ENCODE measurements at regions of chr2 and their contacts with region 1.

Region 1: GRCh38 chr2:84925724-84926376 is 20.4 kb downstream of the TMSB10 start:
- DNase-seq: peak; percentile 95 to 98 (median 98)
- H3K4me3 ChIP-seq: peak overlapping the region; percentile 81
- H3K4me3 Mint-ChIP-seq: peak overlapping the region; percentile 91 to 99 (median 96)
- H3K27ac ChIP-seq: no peak overlapping the region
- H3K27ac Mint-ChIP-seq: peak overlapping the region; percentile 90 to 94 (median 91)
- H3K4me1 ChIP-seq: peaks cover 29% of the 10 kb centered on the region
- H3K4me1 Mint-ChIP-seq: peaks cover 28 to 34% (median 33%) of the 10 kb centered on the region in 3 donors
- H3K27me3 ChIP-seq: no peaks in the 10 kb centered on the region
- H3K27me3 Mint-ChIP-seq: peaks cover 0 to 1% of the 10 kb centered on the region in 2 donors

Region 2: DNA sequence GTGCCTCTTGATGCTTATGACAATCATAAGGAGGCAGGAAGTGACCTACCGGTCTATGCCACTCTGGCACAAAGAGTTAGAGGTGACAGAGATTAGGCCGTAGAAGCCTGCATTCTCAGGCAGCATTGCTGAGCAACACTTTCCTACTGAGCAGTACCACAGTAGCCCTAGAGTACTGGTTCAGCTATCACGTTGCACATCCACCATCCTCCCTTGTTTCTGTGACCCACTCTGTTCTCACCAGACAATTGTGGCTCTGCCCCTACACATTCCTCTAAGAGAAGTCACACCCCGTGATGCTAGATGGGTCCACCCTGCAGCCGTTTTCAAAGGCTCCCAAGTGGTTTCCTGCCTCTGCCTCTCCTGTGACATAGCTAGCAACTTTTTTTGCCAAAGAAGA is 444.1 kb before region 1 on chr2:
- CTCF ChIA-PET with region 1: interaction called, 12 read pairs
- POLR2A ChIA-PET with region 1: no interaction called
- DNase-seq: peak in 2 of 5 donors; percentile 9 to 21
- H3K4me3 ChIP-seq: no peak overlapping the region
- H3K4me3 Mint-ChIP-seq: peak overlapping the region in 4 of 7 donors; percentile 6 to 72 (median 24)
- H3K27ac ChIP-seq: no peak overlapping the region
- H3K27ac Mint-ChIP-seq: peak overlapping the region; percentile 17 to 92 (median 76)
- H3K4me1 ChIP-seq: peaks cover 14% of the 10 kb centered on the region
- H3K4me1 Mint-ChIP-seq: peaks cover 14 to 18% (median 16%) of the 10 kb centered on the region in 3 donors
- H3K27me3 ChIP-seq: no peaks in the 10 kb centered on the region
- H3K27me3 Mint-ChIP-seq: peaks cover 3 to 5% of the 10 kb centered on the region in 2 donors

Region 3: DNA sequence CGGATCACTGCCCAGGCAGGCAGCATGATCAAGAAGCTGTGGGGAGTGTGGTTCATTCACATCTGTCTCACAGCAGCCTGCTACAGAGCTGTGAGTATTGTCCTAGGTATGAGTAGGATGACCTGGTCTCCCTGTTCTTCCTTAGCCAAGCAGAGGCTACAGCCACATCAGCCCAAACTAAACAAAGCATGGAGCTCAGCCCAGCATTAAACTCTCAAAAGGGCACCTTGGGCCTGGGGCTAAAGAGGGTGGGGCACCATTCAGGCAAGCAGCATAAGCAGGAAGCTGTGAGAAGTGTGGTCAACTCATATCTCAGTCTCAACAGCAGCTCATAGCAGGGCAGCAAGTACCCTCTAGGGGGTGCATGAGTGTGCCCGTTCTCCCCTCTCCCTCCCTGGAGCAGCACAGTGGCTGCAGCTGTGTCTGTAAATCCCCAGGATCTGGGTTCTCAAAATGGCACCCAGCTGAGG is 184.5 kb before region 1 on chr2:
- CTCF ChIA-PET with region 1: interaction called, 15 read pairs
- POLR2A ChIA-PET with region 1: no interaction called
- DNase-seq: peak; percentile 17 to 71 (median 52)
- H3K4me3 ChIP-seq: no peak overlapping the region
- H3K4me3 Mint-ChIP-seq: peak overlapping the region in 2 of 7 donors; percentile 16 to 63
- H3K27ac ChIP-seq: no peak overlapping the region
- H3K27ac Mint-ChIP-seq: peak overlapping the region in 7 of 8 donors; percentile 48 to 79 (median 71)
- H3K4me1 ChIP-seq: peaks cover 20% of the 10 kb centered on the region
- H3K4me1 Mint-ChIP-seq: peaks cover 26 to 34% (median 26%) of the 10 kb centered on the region in 3 donors
- H3K27me3 ChIP-seq: no peaks in the 10 kb centered on the region
- H3K27me3 Mint-ChIP-seq: no peaks in the 10 kb centered on the region

Region 4: DNA sequence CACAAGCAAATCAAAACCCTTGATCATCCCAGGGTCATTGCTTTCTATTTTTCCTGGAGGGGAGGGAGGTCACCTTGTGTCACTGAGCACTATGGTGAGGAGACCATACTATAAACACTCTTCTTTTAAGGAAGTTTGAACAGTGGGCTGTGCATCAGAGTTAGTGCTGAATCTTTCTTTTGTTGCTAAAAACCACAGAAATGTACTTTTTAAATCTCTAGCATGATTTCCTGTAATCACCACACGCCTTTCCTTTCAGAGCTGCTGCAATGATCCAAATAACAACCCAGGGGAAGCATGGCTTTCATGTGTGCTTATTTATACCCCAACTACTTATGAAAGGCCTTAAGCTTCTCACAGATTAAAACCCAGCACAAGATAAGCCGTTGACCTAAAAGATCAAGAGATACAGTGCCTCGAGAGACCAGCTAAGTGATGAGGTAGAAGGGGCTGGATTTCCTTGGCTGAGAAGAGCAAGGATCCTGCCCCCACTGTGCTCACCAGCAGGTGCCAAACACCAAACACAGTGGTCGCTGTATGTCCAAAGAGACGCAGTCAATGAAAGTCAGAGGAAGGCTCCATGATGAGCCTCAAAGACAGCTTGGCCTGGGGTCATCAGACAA is 79.7 kb before region 1 on chr2:
- CTCF ChIA-PET with region 1: interaction called, 44 read pairs
- POLR2A ChIA-PET with region 1: interaction called, 3 read pairs
- DNase-seq: peak in 3 of 5 donors; percentile 62 to 85 (median 75)
- H3K4me3 ChIP-seq: peak overlapping the region; percentile 40
- H3K4me3 Mint-ChIP-seq: peak overlapping the region; percentile 25 to 83 (median 69)
- H3K27ac ChIP-seq: peak overlapping the region; percentile 12
- H3K27ac Mint-ChIP-seq: peak overlapping the region; percentile 85 to 98 (median 94)
- H3K4me1 ChIP-seq: peaks cover 96% of the 10 kb centered on the region
- H3K4me1 Mint-ChIP-seq: peaks cover 86 to 96% (median 95%) of the 10 kb centered on the region in 3 donors
- H3K27me3 ChIP-seq: no peaks in the 10 kb centered on the region
- H3K27me3 Mint-ChIP-seq: no peaks in the 10 kb centered on the region

Region 5: DNA sequence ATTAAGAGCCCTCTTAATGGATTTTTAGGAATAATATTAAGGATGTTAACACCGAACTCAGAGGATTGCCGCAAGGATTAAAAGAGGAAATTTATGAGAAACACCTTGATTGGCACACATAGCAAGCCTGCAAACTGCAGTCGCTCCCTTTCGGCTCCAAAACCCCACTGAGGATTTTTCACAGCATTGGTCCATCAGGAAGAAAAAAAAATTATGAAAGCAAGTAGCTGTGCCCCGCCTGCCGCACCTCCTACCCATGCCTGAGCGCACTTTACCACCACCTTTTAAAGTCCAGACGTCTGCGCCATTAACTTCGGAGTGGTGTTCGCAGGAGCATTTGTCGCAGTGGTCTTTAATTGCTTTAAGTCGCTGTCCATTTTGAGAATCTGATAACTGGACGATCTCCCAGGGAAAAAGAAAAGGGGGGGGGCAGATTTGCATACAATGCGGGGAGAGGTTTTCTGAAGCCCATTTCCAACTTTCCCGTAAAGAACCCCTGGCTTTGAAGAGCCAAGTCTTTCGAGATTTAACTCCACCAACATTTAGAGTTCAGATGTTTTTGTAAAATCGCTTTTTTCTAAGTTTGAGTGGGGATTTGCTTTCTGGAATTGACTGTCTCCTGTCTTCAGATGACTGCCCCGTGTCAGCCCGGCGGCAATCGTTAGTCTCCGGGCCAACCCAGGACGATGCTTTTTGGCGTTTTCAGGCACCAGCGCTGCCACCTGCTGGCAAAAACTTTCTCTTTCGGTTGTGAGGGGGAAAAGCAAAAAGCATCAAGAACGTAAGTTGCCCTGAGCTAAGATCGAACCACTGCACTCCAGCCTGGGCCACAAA is 44.1 kb before region 1 on chr2:
- CTCF ChIA-PET with region 1: interaction called, 160 read pairs
- POLR2A ChIA-PET with region 1: interaction called, 29 read pairs
- DNase-seq: peak; percentile 71 to 88 (median 76)
- H3K4me3 ChIP-seq: peak overlapping the region; percentile 68
- H3K4me3 Mint-ChIP-seq: peak overlapping the region; percentile 90 to 99 (median 95)
- H3K27ac ChIP-seq: peak overlapping the region; percentile 58
- H3K27ac Mint-ChIP-seq: peak overlapping the region; percentile 74 to 98 (median 95)
- H3K4me1 ChIP-seq: peaks cover 32% of the 10 kb centered on the region
- H3K4me1 Mint-ChIP-seq: peaks cover 34 to 60% (median 44%) of the 10 kb centered on the region in 3 donors
- H3K27me3 ChIP-seq: no peaks in the 10 kb centered on the region
- H3K27me3 Mint-ChIP-seq: peaks cover 0 to 3% of the 10 kb centered on the region in 2 donors

Region 6: DNA sequence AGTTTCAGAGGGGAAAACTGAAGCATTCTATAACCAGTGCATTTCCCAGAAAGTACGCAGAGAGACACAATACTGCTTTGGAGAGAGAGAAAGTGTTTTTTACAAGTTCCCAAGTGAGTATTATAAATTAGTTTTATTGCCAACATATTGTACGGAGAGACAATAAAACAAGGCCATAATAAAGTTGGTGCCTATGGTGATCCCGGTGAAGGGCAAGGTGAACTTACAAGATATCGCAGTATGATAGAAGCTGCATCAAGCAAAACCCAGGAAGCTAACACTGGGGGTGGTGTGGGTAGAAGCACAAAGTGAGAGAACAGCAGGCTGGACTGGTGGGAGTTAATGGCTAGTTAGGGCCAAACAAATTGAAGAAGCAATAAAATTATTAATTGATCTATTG is 12.9 kb before region 1 on chr2:
- CTCF ChIA-PET with region 1: interaction called, 66 read pairs
- POLR2A ChIA-PET with region 1: no interaction called
- DNase-seq: no peak
- H3K4me3 ChIP-seq: no peak overlapping the region
- H3K4me3 Mint-ChIP-seq: no peak overlapping the region
- H3K27ac ChIP-seq: no peak overlapping the region
- H3K27ac Mint-ChIP-seq: no peak overlapping the region
- H3K4me1 ChIP-seq: peaks cover 21% of the 10 kb centered on the region
- H3K4me1 Mint-ChIP-seq: peaks cover 19 to 26% (median 22%) of the 10 kb centered on the region in 3 donors
- H3K27me3 ChIP-seq: no peaks in the 10 kb centered on the region
- H3K27me3 Mint-ChIP-seq: peaks cover 0 to 1% of the 10 kb centered on the region in 2 donors

Region 7: GRCh38 chr2:84958135-84959044 is 32.5 kb after region 1 on chr2:
- CTCF ChIA-PET with region 1: interaction called, 10 read pairs
- POLR2A ChIA-PET with region 1: no interaction called
- DNase-seq: no peak
- H3K4me3 ChIP-seq: no peak overlapping the region
- H3K4me3 Mint-ChIP-seq: no peak overlapping the region
- H3K27ac ChIP-seq: no peak overlapping the region
- H3K27ac Mint-ChIP-seq: peak overlapping the region in 4 of 8 donors; percentile 4 to 90 (median 52)
- H3K4me1 ChIP-seq: no peaks in the 10 kb centered on the region
- H3K4me1 Mint-ChIP-seq: peaks cover 12 to 20% (median 18%) of the 10 kb centered on the region in 3 donors
- H3K27me3 ChIP-seq: no peaks in the 10 kb centered on the region
- H3K27me3 Mint-ChIP-seq: no peaks in the 10 kb centered on the region